Ascending aorta (tissue), 2 donors: ENCODE measurements at regions of chr13 and their contacts with region 1.

Region 1: GRCh38 chr13:29595380-29596063 is at the start of gene SLC7A1:
- DNase-seq: peak; percentile 30 to 89
- H3K4me3 ChIP-seq: peak within 1 kb of the TSS; percentile 93
- H3K27ac ChIP-seq: peak within 1 kb of the TSS; percentile 93
- H3K4me1 ChIP-seq: peaks cover 0 to 2% of the 10 kb centered on the region in 2 donors
- H3K27me3 ChIP-seq: no peaks in the 10 kb centered on the region
- CTCF ChIP-seq: no peak
- total RNA-seq, gene SLC7A1: 17.2 TPM

Region 2: DNA sequence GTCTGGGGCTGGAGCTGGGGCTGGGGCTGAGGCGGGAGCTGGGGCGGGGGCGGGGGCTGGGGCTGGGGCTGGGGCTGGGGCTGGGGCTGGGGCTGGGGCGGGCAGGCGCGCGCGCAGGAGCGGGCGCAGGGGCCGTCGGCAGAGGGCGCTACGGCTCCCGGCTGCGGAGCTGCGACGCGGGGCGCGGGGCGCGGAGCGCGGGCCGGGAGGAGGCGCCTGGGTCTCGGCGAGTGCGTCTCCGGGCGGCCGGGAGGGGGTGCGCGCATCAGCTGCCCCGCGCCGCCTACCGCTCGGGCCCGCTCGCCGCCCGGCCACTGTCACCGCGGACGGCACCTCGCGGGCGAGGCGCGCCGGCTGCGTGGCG is 775.8 kb before region 1 on chr13:
- intact Hi-C with region 1: loop called (anchors 10 kb)
- DNase-seq: peak in 1 of 2 donors; percentile 76
- H3K4me3 ChIP-seq: peak overlapping the region; percentile 63 to 84
- H3K27ac ChIP-seq: peak overlapping the region; percentile 44 to 78
- H3K4me1 ChIP-seq: peaks cover 0 to 5% of the 10 kb centered on the region in 2 donors
- H3K27me3 ChIP-seq: no peaks in the 10 kb centered on the region
- CTCF ChIP-seq: peak in 2 of 3 experiments; percentile 10 to 75

Region 3: GRCh38 chr13:29227576-29227975 is 367.9 kb before region 1 on chr13:
- intact Hi-C with region 1: no loop called
- DNase-seq: no peak
- H3K4me3 ChIP-seq: no peak overlapping the region
- H3K27ac ChIP-seq: peak overlapping the region; percentile 64 to 69
- H3K4me1 ChIP-seq: peaks cover 0 to 17% of the 10 kb centered on the region in 2 donors
- H3K27me3 ChIP-seq: no peaks in the 10 kb centered on the region
- CTCF ChIP-seq: no peak

Region 4: GRCh38 chr13:29454911-29455481 is 140.5 kb before region 1 on chr13:
- intact Hi-C with region 1: no loop called
- DNase-seq: no peak
- H3K4me3 ChIP-seq: no peak overlapping the region
- H3K27ac ChIP-seq: no peak overlapping the region
- H3K4me1 ChIP-seq: no peaks in the 10 kb centered on the region
- H3K27me3 ChIP-seq: no peaks in the 10 kb centered on the region
- CTCF ChIP-seq: peak in 1 of 3 experiments; percentile 23

Region 5: DNA sequence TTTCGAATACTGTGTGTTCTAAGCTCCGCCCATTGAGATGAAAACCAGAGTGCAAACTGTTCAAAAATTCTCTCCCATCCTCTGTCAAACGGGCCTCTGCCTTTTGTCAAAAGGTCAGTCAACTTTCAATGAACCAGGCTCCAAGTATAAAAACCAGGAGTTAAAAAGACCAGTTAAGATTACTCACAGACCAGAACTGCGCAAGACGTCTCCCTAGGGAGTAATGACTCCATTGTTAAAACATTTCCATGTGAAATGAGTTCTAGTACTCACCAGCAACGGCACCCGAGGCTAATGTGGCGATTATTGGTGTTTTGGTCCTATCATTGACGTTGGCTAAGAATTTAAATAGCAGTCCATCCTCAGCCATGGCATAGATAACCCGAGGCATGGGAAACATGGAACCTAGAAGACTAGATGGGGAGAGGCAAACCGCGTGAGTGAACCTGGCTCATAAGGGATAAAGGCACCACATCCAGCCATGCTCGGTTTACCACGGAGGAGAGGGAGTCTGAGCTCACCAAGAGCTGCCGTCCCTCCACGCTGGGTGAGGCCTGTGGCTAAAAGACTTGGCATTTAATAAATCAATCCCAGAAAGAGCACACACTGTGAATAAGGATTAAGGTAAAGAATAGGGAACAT is 73.4 kb before region 1 on chr13:
- intact Hi-C with region 1: loop called (anchors 5 kb)
- DNase-seq: peak in 1 of 2 donors; percentile 89
- H3K4me3 ChIP-seq: no peak overlapping the region
- H3K27ac ChIP-seq: peak overlapping the region; percentile 50 to 65
- H3K4me1 ChIP-seq: peaks cover 3 to 10% of the 10 kb centered on the region in 2 donors
- H3K27me3 ChIP-seq: no peaks in the 10 kb centered on the region
- CTCF ChIP-seq: no peak

Region 6: GRCh38 chr13:29543230-29544215 is 52.0 kb before region 1 on chr13:
- intact Hi-C with region 1: no loop called
- DNase-seq: no peak
- H3K4me3 ChIP-seq: no peak overlapping the region
- H3K27ac ChIP-seq: no peak overlapping the region
- H3K4me1 ChIP-seq: no peaks in the 10 kb centered on the region
- H3K27me3 ChIP-seq: no peaks in the 10 kb centered on the region
- CTCF ChIP-seq: no peak

Region 7: GRCh38 chr13:29923554-29924481 is 328.3 kb after region 1 on chr13:
- intact Hi-C with region 1: loop called (anchors 2 kb)
- DNase-seq: peak; percentile 81 to 96
- H3K4me3 ChIP-seq: no peak overlapping the region
- H3K27ac ChIP-seq: peak overlapping the region; percentile 85 to 93
- H3K4me1 ChIP-seq: peaks cover 15 to 36% of the 10 kb centered on the region in 2 donors
- H3K27me3 ChIP-seq: no peaks in the 10 kb centered on the region
- CTCF ChIP-seq: peak; percentile 80 to 92 (median 91)

Region 8: GRCh38 chr13:30313311-30313710 is 717.8 kb after region 1 on chr13:
- intact Hi-C with region 1: loop called (anchors 5 kb)
- DNase-seq: no peak
- H3K4me3 ChIP-seq: no peak overlapping the region
- H3K27ac ChIP-seq: no peak overlapping the region
- H3K4me1 ChIP-seq: peaks cover 0 to 10% of the 10 kb centered on the region in 2 donors
- H3K27me3 ChIP-seq: no peaks in the 10 kb centered on the region
- CTCF ChIP-seq: no peak

Region 9: GRCh38 chr13:31161828-31162590 is 1566.5 kb after region 1 on chr13 and contains the start of gene HSPH1:
- intact Hi-C with region 1: loop called (anchors 5 kb)
- DNase-seq: peak; percentile 95 to 99
- H3K4me3 ChIP-seq: peak within 1 kb of the TSS; percentile 80 to 91
- H3K27ac ChIP-seq: peak within 1 kb of the TSS; percentile 94 to 95
- H3K4me1 ChIP-seq: peaks cover 0 to 10% of the 10 kb centered on the region in 2 donors
- H3K27me3 ChIP-seq: no peaks in the 10 kb centered on the region
- CTCF ChIP-seq: peak in 2 of 3 experiments; percentile 24 to 26
- total RNA-seq, gene HSPH1: 20.6 TPM